ENCODE measurements at regions of chr3 and their contacts with region 1.

Region 1: DNA sequence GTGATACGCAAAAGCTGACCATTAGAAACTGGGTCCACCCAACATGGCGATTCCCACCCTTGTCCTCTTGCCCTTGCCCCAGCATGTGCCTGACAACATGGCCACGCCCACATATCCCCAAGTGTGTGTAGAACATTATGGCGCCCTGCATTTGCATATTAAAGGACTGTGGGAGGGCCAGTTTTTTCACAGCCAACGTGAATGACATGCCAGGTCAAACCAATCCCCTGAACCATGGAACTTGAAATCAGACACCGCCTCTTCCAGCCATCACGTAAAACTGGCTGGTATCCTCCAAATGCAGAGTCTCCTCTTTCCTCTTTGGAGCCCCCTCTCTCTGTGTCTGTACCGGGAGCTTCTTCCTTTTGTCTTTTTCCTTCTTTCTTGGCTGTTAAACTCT is 156.7 kb upstream of the EPHA6 start:
- DNase-seq: no peak
- ATAC-seq: no peak
- H3K4me3 ChIP-seq: no peak overlapping the region
- H3K27ac ChIP-seq: no peak overlapping the region
- H3K4me1 ChIP-seq: no peaks in the 10 kb centered on the region
- H3K27me3 ChIP-seq: no peaks in the 10 kb centered on the region

Region 2: GRCh38 chr3:95333826-95334225 is 1323.9 kb before region 1 on chr3:
- intact Hi-C with region 1: loop called in 1 of 4 experiments (anchors 10 kb)
- DNase-seq: no peak
- ATAC-seq: no peak
- H3K4me3 ChIP-seq: no peak overlapping the region
- H3K27ac ChIP-seq: no peak overlapping the region
- H3K4me1 ChIP-seq: no peaks in the 10 kb centered on the region
- H3K27me3 ChIP-seq: no peaks in the 10 kb centered on the region

Measured in right cardiac atrium (tissue), 5 donors.